Aorta (tissue), 5 donors: ENCODE measurements at regions of chr2 and their contacts with region 1.

Region 1: DNA sequence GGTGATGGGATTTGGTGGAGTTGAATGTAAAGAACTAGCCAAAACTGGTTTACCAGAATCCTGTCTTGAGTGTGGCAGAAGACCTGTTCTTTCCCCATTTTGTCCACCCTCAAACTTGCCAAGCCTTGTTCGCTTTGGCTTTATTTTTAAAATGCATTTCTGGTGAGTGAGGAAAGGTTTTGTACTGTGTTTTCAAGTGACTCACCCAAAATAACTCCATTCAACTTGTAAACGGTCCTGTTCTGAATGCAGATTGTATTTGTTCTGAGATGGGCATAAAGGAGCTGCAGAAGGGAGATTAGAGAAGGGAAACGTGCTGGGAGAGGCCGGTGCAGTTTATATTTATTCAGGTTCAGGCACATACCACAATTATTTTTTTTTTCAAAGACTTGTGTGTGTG is 5.3 kb upstream of the ITPRID2 start:
- DNase-seq: no peak
- ATAC-seq: no peak
- H3K4me3 ChIP-seq: no peak overlapping the region
- H3K27ac ChIP-seq: no peak overlapping the region
- H3K4me1 ChIP-seq: peaks cover 0 to 9% of the 10 kb centered on the region in 2 donors
- H3K27me3 ChIP-seq: no peaks in the 10 kb centered on the region

Region 2: DNA sequence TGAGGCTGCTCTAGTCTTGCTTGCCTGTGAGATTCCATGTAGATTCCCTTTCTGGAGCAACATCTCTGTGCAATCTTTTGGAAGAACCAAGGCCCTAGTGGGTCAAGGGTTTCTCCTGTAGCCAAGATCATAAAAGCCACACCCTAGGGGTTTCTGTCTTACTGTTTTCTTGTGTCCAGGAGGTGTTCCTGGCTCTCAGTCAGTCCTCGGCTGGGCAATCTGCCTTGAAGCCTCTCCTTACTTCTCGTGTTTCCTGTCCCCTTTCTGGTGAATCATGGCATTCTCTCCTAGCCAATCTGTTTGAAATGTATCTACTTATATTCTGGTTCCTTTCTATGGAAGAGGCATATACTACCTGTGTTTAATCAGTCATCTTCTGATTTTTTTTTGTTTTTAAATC is 1390.6 kb before region 1 on chr2:
- intact Hi-C with region 1: no loop called
- DNase-seq: peak in 1 of 2 donors; percentile 53
- ATAC-seq: peak; percentile 19
- H3K4me3 ChIP-seq: no peak overlapping the region
- H3K27ac ChIP-seq: no peak overlapping the region
- H3K4me1 ChIP-seq: no peaks in the 10 kb centered on the region
- H3K27me3 ChIP-seq: peaks cover 0 to 3% of the 10 kb centered on the region in 2 donors

Region 3: GRCh38 chr2:181677912-181678586 is 208.1 kb before region 1 on chr2:
- intact Hi-C with region 1: no loop called
- DNase-seq: peak; percentile 77 to 85
- ATAC-seq: peak; percentile 77
- H3K4me3 ChIP-seq: no peak overlapping the region
- H3K27ac ChIP-seq: no peak overlapping the region
- H3K4me1 ChIP-seq: no peaks in the 10 kb centered on the region
- H3K27me3 ChIP-seq: peaks cover 0 to 2% of the 10 kb centered on the region in 2 donors

Region 4: DNA sequence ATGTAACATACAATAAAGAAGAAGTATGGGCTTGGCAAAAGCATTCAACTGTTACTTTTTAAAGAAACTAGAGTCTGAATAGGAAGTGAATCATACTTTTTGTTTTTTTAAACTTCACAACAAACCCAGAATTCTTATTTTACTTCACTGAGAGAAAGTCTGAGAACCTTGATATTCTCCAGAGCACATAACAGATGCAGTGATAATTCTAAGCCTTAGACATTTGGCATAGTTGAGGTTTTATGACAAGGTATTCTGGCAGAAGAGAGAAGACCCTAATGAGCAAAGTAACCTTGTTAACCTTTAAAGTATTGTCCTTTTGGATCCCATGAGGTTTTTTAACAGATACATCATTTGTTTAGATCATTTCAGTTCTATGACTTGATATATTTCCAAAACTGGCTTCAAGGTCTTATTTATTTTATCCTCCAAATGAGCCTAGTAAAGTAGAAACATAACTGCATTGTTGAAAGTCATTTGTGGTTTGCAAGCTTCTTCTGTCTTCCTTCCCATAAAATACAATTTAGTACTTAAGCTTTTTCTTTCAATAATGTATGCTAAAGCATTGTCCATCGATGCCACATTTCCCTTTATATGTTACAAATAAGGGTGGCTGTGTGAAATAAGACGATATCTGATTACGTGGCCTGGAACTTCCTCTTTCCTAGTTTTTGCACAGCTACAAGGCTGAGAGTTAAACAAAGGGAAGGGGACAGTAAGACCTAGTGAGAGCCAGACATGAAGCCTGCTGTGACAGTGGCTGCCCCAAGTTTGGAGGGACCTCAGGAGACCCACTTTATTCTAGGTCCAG is 80.8 kb before region 1 on chr2:
- intact Hi-C with region 1: loop called in 1 of 2 experiments (anchors 2 kb)
- DNase-seq: no peak
- ATAC-seq: peak; percentile 50
- H3K4me3 ChIP-seq: no peak overlapping the region
- H3K27ac ChIP-seq: peak overlapping the region; percentile 18 to 77
- H3K4me1 ChIP-seq: peaks cover 0 to 4% of the 10 kb centered on the region in 2 donors
- H3K27me3 ChIP-seq: no peaks in the 10 kb centered on the region